ENCODE measurements at regions of chr18 and their contacts with region 1.

Region 1: GRCh38 chr18:80147418-80148325 is 38.6 kb downstream of the ADNP2 start:
- DNase-seq: peak; percentile 70
- H3K4me3 Mint-ChIP-seq: peak overlapping the region; percentile 86
- H3K27ac Mint-ChIP-seq: peak overlapping the region; percentile 65
- H3K4me1 Mint-ChIP-seq: peaks cover 10% of the 10 kb centered on the region
- H3K27me3 Mint-ChIP-seq: peaks cover 3% of the 10 kb centered on the region

Region 2: DNA sequence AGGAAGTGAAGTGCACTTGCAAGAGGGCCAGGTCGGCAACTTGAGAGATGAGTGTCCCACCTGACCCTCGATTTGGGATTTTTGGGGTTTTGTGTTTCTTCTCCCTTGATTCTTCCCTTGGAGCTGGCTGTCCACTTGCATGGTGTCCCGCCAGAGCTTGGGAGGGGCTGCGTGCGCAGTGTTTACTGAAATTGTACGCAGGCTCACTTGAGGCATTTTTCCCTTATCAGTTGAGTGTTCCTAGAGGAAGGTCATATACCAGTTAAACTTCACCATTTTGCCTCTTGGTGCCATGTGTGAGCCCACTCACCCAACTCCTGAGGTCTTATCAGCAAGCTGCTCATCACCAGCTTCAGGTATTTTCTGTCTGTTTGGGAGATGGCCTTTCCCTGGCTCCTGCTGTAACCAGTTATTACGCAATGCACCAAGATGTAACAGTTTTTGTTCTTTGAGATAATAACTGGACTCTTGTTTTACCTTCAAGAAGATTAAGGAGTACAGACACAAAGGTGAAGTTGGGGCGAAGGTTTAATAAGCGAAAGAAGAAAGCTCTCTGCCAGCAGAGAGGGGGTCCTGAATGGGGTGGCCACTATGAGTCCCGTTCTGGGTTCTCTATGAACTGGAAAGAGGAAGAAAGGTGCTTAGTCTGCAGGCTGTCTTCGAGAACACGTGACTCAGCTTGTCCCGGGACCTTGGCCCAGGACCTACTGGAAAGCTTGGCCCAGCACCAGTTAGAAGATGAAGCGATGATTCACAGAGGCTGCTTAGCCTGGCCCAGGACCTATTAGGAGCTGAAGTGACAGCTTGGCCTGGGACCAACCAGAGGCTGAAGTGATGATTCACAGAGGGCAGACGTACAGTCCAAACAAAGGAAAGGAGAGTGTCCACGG is 137.8 kb before region 1 on chr18:
- intact Hi-C with region 1: no loop called
- DNase-seq: no peak
- H3K4me3 Mint-ChIP-seq: no peak overlapping the region
- H3K27ac Mint-ChIP-seq: no peak overlapping the region
- H3K4me1 Mint-ChIP-seq: no peaks in the 10 kb centered on the region
- H3K27me3 Mint-ChIP-seq: no peaks in the 10 kb centered on the region

Region 3: DNA sequence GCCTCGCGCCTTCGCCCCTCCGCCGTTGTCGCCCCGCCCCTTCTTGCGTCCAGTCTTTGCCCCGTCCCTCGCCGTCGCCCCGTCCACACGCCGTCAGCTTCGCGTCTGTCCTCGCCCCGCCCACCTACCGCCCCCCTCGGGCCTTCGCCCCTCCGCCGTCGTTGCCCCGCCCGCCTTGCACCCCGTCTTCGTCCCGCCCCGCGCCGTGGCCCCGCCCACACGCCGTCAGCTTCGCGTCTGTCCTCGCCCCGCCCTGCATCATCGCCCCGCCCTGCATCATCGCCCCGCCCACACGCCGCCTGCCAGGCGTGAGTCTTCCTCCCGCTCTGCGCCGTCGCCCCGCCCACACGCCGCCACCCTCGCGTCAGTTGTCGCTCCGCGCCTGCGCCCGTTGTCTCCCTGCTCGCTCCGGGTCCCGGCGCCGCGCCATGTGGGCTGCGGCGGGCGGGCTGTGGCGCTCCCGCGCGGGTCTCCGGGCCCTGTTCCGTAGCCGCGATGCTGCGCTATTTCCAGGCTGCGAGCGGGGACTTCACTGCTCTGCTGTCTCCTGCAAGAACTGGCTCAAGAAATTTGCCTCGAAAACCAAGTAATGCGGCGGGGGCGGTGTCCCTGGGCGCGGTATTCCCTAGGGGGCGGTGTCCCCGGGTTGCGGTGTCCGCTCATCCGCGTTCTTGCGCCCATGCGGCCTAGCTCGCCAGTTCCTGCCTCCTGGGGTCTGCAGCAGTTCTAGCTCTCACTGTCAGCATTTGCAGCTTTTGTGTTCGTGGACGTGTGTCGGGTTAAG is 113.4 kb before region 1 on chr18 and contains the start of gene RBFA:
- intact Hi-C with region 1: loop called (anchors 1 kb)
- DNase-seq: peak; percentile 98
- H3K4me3 Mint-ChIP-seq: peak within 1 kb of the TSS; percentile 87
- H3K27ac Mint-ChIP-seq: peak within 1 kb of the TSS; percentile 88
- H3K4me1 Mint-ChIP-seq: peaks cover 25% of the 10 kb centered on the region
- H3K27me3 Mint-ChIP-seq: peaks cover 4% of the 10 kb centered on the region
- total RNA-seq, gene RBFA: 48.5 and 50.3 TPM in 2 replicates

Region 4: DNA sequence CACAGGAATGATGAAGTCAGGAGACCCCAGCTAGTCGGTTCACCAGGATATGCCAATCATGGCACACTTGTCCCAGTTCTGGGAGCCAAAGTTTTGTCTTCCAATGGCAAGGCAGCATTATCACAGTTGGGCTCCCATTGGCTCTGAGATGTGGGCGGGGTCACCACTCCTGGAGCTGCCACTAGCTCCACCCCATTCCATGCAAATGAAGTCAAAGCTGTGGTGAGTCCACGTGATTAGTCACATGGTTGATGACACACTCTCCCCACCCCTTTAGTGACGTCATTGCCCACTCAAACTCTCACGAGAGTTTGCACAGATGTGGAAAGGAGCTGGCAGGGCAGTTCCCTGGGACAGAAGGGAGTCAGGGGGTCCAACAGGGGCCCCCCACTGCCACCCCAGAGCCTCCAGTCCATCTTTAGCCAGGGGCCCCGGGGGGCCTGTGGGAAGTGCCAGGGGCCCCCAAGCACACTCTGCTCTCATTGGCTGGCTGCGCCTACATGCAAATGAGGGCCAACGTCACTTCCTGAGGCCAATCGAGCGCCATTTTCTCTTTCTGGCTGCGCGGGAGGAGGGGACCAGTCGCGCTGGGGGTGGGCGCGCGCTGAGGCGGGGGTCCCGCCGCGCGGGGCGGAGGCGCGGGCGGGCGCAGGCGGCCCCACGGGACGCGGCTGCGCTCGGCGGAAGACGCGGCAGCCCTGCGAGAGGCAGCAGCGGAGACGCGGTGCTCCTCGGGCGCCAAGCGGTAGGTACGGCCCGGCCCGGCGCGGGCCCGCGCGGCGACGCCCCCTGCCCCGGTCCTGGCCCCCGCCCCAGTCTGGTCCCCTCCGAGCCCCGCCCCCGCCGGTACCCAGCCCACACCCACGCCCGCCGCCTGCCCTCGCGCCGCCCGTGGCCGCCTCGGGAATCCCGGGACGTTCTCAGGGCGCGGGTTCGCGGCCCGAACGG is 38.7 kb before region 1 on chr18 and contains the start of gene ADNP2:
- intact Hi-C with region 1: loop called (anchors 1 kb)
- DNase-seq: peak; percentile 81
- H3K4me3 Mint-ChIP-seq: peak within 1 kb of the TSS; percentile 86
- H3K27ac Mint-ChIP-seq: peak within 1 kb of the TSS; percentile 86
- H3K4me1 Mint-ChIP-seq: peaks cover 24% of the 10 kb centered on the region
- H3K27me3 Mint-ChIP-seq: peaks cover 6% of the 10 kb centered on the region
- total RNA-seq, gene ADNP2: 29.0 TPM in 2 replicates

Measured in activated T-helper 1 cell treated with anti-CD3 and anti-CD28 coated beads, Interleukin-12 subunit alpha, Interleukin-12 subunit beta, Interleukin-2, Interleukin-4 antibody, amounts not matched to agents 30 ng/mL and 10 ng/mL and 1 ng/mL, durations not matched to agents 14 hours and 24 hours and 36 hours (primary cell).